ENCODE measurements at regions of chr5 and their contacts with region 1.

Region 1: GRCh38 chr5:55691265-55692105 is 20.6 kb downstream of the SLC38A9 start:
- DNase-seq: no peak
- ATAC-seq: no peak
- H3K4me3 Mint-ChIP-seq: no peak overlapping the region
- H3K27ac Mint-ChIP-seq: no peak overlapping the region
- H3K4me1 Mint-ChIP-seq: peaks cover 3% of the 10 kb centered on the region
- H3K27me3 Mint-ChIP-seq: no peaks in the 10 kb centered on the region

Region 2: DNA sequence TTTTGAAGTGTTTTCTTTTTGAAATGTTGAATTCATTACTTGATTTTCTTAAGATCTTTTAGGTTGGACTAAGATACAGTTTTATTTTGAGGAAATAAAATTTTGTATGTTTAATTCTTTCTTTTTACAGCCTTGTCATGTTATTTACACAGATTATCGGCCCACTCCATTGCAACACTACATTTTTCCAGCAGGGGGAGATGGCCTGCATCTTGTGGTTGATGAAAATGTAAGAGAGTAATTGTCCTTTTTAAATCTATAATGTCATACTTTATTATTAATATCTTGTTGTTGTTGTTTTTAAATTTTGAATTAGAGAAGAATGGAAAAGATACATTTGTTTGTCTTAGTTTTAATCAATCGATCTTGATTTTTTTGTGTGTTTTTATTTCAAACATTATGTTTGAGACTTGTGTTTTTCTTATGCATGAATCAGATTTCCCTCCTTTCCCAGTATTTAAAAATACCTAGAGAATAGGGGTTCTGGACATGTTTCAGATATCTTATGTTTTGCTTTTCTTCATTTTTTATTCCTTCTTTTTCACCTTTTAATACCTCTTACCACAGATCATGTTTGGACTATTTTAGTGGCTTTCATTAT is 347.0 kb before region 1 on chr5:
- CTCF ChIA-PET with region 1: interaction called, 14 read pairs
- DNase-seq: peak; percentile 77
- ATAC-seq: no peak
- H3K4me3 Mint-ChIP-seq: no peak overlapping the region
- H3K27ac Mint-ChIP-seq: no peak overlapping the region
- H3K4me1 Mint-ChIP-seq: peaks cover 1% of the 10 kb centered on the region
- H3K27me3 Mint-ChIP-seq: no peaks in the 10 kb centered on the region